ENCODE measurements at regions of chr4 and their contacts with region 1.

Region 1: DNA sequence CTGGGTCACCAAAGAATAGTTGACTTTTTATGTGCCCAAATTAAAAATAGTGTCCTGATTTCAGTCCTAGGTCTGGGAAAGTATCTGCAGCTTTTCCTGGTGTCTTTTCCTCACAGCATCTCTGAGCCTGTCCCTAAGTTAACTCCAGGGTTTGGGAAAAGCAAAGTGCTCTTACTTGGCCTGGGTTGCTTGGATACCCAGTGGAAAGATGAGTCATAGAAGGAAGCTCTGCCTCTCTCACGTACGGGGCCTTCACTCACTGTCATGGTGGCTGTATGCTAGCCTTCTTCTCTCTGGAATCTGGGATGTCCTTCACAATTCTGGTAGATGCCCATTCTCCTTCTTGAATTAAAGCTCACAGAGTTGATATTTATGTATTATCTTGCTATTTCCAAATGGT is 607.3 kb downstream of the ANKRD50 start:
- DNase-seq: no peak
- ATAC-seq: no peak
- H3K4me3 ChIP-seq: no peak overlapping the region
- H3K27ac ChIP-seq: no peak overlapping the region
- H3K4me1 ChIP-seq: no peaks in the 10 kb centered on the region
- H3K27me3 ChIP-seq: no peaks in the 10 kb centered on the region
- CTCF ChIP-seq: no peak

Region 2: GRCh38 chr4:123832173-123833026 is 272.8 kb before region 1 on chr4:
- intact Hi-C with region 1: loop called in 1 of 2 experiments (anchors 10 kb)
- DNase-seq: peak in 3 of 4 donors; percentile 45 to 97 (median 94)
- ATAC-seq: peak; percentile 82
- H3K4me3 ChIP-seq: no peak overlapping the region
- H3K27ac ChIP-seq: peak overlapping the region; percentile 38 to 73
- H3K4me1 ChIP-seq: no peaks in the 10 kb centered on the region
- H3K27me3 ChIP-seq: no peaks in the 10 kb centered on the region
- CTCF ChIP-seq: no peak

Region 3: DNA sequence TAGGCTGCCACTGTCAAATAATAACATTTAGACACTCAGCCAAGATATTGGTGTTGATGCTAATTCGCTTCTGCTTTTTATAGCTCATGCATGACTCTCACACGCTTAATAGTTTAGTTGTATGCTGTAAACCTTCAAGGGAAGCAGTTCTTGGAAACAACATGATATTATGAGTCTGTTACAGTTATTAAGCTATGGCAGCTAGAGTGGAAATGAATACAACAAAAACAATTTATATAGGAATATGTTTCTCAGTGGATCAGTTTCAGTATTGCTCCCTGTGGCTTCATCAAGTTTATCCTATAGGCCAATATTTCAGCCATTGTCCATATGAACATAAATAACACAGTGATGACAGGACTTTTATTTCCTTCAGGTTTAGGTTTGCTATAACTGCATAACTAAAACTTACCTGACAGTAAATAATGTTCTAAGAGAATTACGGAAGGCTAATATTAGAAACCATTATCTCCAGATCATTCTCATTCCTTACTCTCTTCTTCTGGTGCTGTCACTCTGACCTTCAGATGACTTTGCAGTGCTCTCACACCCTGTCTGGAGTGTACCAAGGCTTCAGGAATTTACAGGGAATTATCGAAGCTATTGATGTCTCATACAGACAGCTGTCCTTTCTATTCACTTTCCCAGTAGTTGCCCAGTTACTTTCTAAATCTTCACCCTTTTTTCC is 52.3 kb after region 1 on chr4:
- intact Hi-C with region 1: no loop called
- DNase-seq: no peak
- ATAC-seq: no peak
- H3K4me3 ChIP-seq: no peak overlapping the region
- H3K27ac ChIP-seq: no peak overlapping the region
- H3K4me1 ChIP-seq: no peaks in the 10 kb centered on the region
- H3K27me3 ChIP-seq: no peaks in the 10 kb centered on the region
- CTCF ChIP-seq: no peak

Region 4: GRCh38 chr4:124970011-124970410 is 864.8 kb after region 1 on chr4:
- intact Hi-C with region 1: no loop called
- DNase-seq: no peak
- ATAC-seq: no peak
- H3K4me3 ChIP-seq: no peak overlapping the region
- H3K27ac ChIP-seq: no peak overlapping the region
- H3K4me1 ChIP-seq: no peaks in the 10 kb centered on the region
- H3K27me3 ChIP-seq: no peaks in the 10 kb centered on the region
- CTCF ChIP-seq: no peak

Measured in left lung (tissue), 14 donors.